ENCODE measurements at regions of chr19 and their contacts with region 1.

Region 1: DNA sequence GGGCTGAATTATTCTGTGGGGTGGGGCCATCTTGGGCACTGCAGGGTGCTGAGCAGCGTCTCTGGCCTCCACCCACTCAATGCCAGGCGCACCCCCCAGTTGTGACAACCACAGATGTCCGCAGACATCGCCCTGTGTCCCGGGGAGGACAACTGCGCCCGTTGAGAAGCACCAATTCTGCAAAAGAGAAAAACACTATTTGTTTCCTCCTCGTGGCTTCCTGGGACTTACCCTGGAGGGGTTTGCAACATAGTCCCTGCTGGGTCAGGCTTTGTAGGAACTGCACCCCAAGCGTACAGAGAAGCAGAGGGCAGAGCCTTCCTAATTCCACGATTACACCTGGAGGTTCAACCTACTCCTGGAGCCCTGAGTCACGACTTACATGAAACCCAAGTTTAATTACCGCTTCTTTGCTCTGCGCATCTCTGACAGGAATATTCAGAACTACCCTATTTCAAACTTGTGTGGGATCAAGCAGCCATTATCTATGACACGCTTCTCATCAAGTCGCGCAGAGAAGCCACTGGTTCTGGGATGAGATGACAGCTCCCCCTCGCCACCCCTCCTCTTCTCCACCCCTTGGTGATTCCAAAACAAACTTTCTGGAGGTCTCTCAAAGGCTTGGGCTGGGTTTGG is 11.1 kb upstream of the SLC39A3 start:
- DNase-seq: no peak
- ATAC-seq: no peak
- H3K4me3 ChIP-seq: no peak overlapping the region
- H3K27ac ChIP-seq: no peak overlapping the region
- H3K4me1 ChIP-seq: peaks cover 0 to 17% of the 10 kb centered on the region in 2 experiments; a peak in 2 of 5 replicates
- H3K27me3 ChIP-seq: peaks cover 7 to 14% of the 10 kb centered on the region in 2 experiments; a peak in 3 of 5 replicates
- CTCF ChIP-seq: no peak
- EP300 ChIP-seq: no peak
- POLR2A ChIP-seq: no peak
- RAD21 ChIP-seq: no peak

Region 2: DNA sequence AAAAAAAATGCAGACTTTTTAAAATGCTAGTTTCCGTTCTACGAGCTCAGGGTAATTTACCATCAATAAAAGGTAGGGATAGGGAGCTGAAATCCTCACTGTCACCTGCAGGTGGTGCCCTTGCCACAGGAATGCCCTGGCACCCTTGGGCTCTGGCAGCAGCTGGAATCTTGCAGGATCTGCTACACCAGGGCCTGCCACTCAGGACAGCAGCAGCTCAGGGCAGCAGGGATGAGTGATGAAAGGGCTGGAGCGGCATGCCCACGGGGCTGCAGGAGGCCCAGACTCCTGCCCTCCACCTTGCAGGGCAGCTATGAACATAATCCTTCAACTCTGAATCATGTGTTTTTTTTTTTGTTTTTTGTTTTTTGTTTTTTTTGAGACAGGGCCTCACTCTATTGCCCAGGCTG is 102.4 kb before region 1 on chr19:
- CTCF ChIA-PET with region 1: interaction called, 19 read pairs
- POLR2A ChIA-PET with region 1: interaction called, 3 read pairs
- in situ Hi-C with region 1: no loop called
- intact Hi-C with region 1: loop called (anchors 1 kb)
- DNase-seq: peak; percentile 78 to 84 (median 83)
- ATAC-seq: peak; percentile 95
- H3K4me3 ChIP-seq: no peak overlapping the region
- H3K27ac ChIP-seq: no peak overlapping the region
- H3K4me1 ChIP-seq: peaks cover 0 to 11% of the 10 kb centered on the region in 2 experiments; a peak in 2 of 5 replicates
- H3K27me3 ChIP-seq: peaks cover 21 to 51% of the 10 kb centered on the region in 2 experiments; a peak in 4 of 5 replicates
- CTCF ChIP-seq: peak; percentile 87 to 96 (median 91)
- EP300 ChIP-seq: no peak
- POLR2A ChIP-seq: no peak
- RAD21 ChIP-seq: peak; percentile 92 to 97

Region 3: GRCh38 chr19:2663920-2664571 is 86.9 kb before region 1 on chr19:
- CTCF ChIA-PET with region 1: no interaction called
- POLR2A ChIA-PET with region 1: no interaction called
- in situ Hi-C with region 1: no loop called
- intact Hi-C with region 1: loop called (anchors 5 kb)
- DNase-seq: peak in 3 of 4 experiments; percentile 24 to 33 (median 28)
- ATAC-seq: peak; percentile 52
- H3K4me3 ChIP-seq: no peak overlapping the region
- H3K27ac ChIP-seq: no peak overlapping the region
- H3K4me1 ChIP-seq: peaks cover 0 to 6% of the 10 kb centered on the region in 2 experiments; a peak in 1 of 5 replicates
- H3K27me3 ChIP-seq: peaks cover 19 to 56% of the 10 kb centered on the region in 2 experiments; a peak in 4 of 5 replicates
- CTCF ChIP-seq: peak; percentile 31 to 45 (median 43); a peak in 3 of 6 replicates
- EP300 ChIP-seq: no peak
- POLR2A ChIP-seq: no peak
- RAD21 ChIP-seq: peak in 1 of 2 experiments; percentile 40; a peak in 2 of 4 replicates

Region 4: GRCh38 chr19:2798733-2799132 is 47.8 kb after region 1 on chr19:
- CTCF ChIA-PET with region 1: no interaction called
- POLR2A ChIA-PET with region 1: no interaction called
- in situ Hi-C with region 1: no loop called
- intact Hi-C with region 1: no loop called
- DNase-seq: peak in 1 of 4 experiments; percentile 39
- ATAC-seq: no peak
- H3K4me3 ChIP-seq: no peak overlapping the region
- H3K27ac ChIP-seq: no peak overlapping the region
- H3K4me1 ChIP-seq: peaks cover 0 to 19% of the 10 kb centered on the region in 2 experiments; a peak in 2 of 5 replicates
- H3K27me3 ChIP-seq: no peaks in the 10 kb centered on the region
- CTCF ChIP-seq: no peak
- EP300 ChIP-seq: no peak
- POLR2A ChIP-seq: no peak
- RAD21 ChIP-seq: no peak